Activated T-helper 2 cell treated with anti-CD3 and anti-CD28 coated beads, Interferon-gamma antibody, Interleukin-2, Interleukin-4, amounts not matched to agents 10 μg/mL and 5 μg/mL and 100 μg/mL, durations not matched to agents 14 hours and 24 hours and 36 hours (primary cell): ENCODE measurements at regions of chr11 and their contacts with region 1.

Region 1: DNA sequence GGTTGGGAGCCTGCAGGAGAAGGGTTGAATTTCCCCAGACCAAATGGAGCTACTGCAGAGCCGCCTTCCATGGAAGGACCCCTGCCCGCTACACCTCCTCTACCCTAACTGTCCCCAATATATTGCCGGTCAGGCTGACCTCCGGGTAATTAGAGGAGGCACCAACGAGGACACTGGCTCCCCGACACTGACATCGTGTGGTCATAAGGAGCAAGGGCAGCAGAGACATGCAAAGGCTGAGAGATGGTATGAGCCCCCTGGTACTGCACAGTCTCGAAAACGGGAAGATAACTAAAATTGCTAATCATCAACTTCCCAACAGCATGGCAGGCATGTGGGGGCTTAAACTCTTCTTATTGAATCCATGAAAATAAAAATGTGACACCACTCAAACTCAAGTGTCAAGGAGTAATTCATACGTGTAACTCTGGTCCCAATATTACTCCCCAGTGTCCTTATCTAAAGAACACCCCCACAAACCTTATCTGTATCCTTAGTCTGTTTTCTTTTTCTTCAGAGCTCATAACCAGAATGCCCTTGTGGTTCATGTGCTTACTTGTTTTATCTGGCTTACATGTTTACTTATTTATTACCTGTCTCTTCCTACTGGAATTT is 4.4 kb downstream of the CAVIN3 start:
- DNase-seq: peak; percentile 16
- H3K4me3 Mint-ChIP-seq: no peak overlapping the region
- H3K27ac Mint-ChIP-seq: no peak overlapping the region
- H3K4me1 Mint-ChIP-seq: peaks cover 18% of the 10 kb centered on the region
- H3K27me3 Mint-ChIP-seq: peaks cover 20% of the 10 kb centered on the region

Region 2: DNA sequence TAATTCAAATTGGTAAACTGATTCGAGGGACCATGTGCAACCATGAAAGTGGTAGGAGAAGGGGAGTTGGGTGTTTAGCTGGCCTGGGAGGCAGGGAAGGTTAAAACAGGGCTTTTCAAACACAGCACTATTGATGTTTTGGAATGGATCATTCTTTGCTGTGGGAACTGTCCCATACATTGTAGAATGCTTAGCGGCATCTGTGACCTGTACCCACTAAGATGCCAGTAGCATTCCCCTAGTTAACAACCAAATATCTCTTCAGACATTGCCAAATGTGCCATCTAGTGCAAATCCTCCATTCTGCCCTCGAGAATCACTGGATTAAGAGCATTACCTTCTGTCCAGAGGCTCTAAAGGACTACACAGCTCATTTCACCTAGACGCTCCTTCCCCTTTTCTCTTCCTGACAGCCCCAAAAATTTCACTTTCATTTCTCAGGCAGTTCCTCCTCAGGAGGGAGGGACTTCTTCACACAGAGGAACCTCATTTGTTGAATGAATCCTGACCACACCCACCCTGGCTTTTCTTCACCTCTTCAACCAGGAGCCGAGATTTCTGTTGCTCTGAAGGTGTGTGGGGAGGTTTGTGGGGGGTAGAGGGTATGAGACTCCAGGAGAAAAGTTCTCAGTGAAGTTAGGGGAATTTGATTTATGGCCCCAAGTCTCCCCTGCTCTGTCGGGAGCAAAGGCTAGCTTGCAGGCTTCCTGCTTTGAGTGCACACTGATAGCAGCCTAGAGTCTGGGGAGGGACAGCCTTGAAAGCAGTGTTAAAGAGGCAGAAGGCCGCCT is 691.2 kb before region 1 on chr11 and contains the start of gene TRIM34:
- intact Hi-C with region 1: loop called (anchors 10 kb)
- DNase-seq: peak; percentile 62
- H3K4me3 Mint-ChIP-seq: peak within 1 kb of the TSS; percentile 92
- H3K27ac Mint-ChIP-seq: peak within 1 kb of the TSS; percentile 71
- H3K4me1 Mint-ChIP-seq: peaks cover 42% of the 10 kb centered on the region
- H3K27me3 Mint-ChIP-seq: no peaks in the 10 kb centered on the region
- total RNA-seq, gene TRIM34: 6.7 and 7.8 TPM in 2 replicates

Region 3: DNA sequence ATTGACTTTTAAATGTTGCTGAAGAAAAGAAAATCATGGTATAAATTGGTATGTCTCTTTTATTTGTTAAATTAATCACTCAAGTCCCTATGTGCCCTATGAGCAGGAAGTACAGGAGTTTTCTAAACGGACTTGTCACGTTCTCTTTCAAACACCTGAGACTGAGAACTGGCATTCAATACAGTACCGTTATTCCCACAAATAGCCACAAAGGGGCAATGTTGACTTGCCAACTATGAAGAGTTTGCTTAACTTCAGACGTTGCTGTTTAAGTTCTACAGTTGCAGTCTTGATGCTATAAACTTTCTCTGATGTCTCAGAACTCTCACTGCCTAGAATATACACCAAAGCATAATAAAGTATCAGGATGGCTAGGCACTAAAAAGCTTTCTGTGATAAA is 293.0 kb before region 1 on chr11:
- intact Hi-C with region 1: loop called (anchors 2 kb)
- DNase-seq: no peak
- H3K4me3 Mint-ChIP-seq: no peak overlapping the region
- H3K27ac Mint-ChIP-seq: no peak overlapping the region
- H3K4me1 Mint-ChIP-seq: no peaks in the 10 kb centered on the region
- H3K27me3 Mint-ChIP-seq: peaks cover 30% of the 10 kb centered on the region

Region 4: GRCh38 chr11:6234387-6235107 is 81.4 kb before region 1 on chr11 and contains the start of gene FHIP1B:
- intact Hi-C with region 1: loop called (anchors 1 kb)
- DNase-seq: peak; percentile 100
- H3K4me3 Mint-ChIP-seq: peak within 1 kb of the TSS; percentile 97
- H3K27ac Mint-ChIP-seq: peak within 1 kb of the TSS; percentile 95
- H3K4me1 Mint-ChIP-seq: peaks cover 38% of the 10 kb centered on the region
- H3K27me3 Mint-ChIP-seq: no peaks in the 10 kb centered on the region
- total RNA-seq, gene FHIP1B: 17.6 and 17.9 TPM in 2 replicates

Region 5: DNA sequence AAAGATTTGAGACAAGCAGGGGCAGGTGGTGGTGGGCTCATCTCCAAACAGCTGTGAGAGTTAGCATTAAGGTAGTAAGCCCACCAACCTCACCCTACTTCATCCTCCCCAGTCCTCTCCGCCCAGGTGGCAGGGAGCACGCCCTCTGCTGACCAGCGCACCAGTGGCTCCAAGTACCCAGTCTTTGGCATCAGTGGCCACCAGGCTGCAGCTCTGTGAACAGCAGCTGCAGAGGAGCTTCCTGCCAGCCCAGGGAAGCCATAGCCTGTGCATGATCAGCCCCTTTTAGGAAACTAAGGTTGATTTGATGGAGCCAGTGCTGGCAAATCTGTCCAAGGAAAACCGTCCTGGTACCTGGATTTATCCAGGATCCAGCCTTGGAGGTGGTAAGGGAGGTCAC is 17.3 kb before region 1 on chr11:
- intact Hi-C with region 1: no loop called
- DNase-seq: no peak
- H3K4me3 Mint-ChIP-seq: no peak overlapping the region
- H3K27ac Mint-ChIP-seq: no peak overlapping the region
- H3K4me1 Mint-ChIP-seq: no peaks in the 10 kb centered on the region
- H3K27me3 Mint-ChIP-seq: peaks cover 5% of the 10 kb centered on the region

Region 6: DNA sequence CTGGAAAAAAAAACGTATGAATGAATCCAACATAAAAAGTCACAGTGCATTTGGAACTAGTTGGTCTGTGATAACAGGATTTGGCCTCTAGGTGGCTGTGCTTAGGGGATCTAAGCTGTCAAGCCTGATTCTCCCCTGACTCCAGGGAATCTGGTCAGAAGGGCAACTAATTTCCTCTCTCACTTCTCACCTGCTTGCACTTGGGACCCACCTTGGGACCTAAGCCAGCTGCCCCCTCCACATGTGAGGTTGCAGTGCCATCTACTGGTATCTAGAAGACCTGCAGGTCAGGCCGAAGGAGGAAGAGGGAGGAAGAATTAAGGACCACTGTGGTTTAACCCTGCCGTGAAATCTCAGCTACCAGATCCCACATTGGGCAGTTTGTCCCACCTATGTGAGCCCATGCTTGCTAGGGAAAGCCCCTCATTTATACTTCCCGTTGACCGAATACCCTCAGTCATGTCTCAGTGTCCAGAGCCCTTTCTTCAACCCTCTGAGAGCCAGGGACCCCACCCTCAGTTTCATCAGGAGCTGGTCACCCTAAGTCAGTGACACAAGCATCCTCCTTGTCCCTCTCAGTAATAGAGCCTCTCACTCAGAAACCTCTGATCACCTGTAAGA is 37.6 kb after region 1 on chr11:
- intact Hi-C with region 1: loop called (anchors 1 kb)
- DNase-seq: peak; percentile 44
- H3K4me3 Mint-ChIP-seq: no peak overlapping the region
- H3K27ac Mint-ChIP-seq: peak overlapping the region; percentile 34
- H3K4me1 Mint-ChIP-seq: peaks cover 45% of the 10 kb centered on the region
- H3K27me3 Mint-ChIP-seq: no peaks in the 10 kb centered on the region

Region 7: GRCh38 chr11:6402561-6402981 is 86.7 kb after region 1 on chr11:
- intact Hi-C with region 1: loop called (anchors 5 kb)
- DNase-seq: peak; percentile 78
- H3K4me3 Mint-ChIP-seq: peak overlapping the region; percentile 64
- H3K27ac Mint-ChIP-seq: peak overlapping the region; percentile 93
- H3K4me1 Mint-ChIP-seq: peaks cover 56% of the 10 kb centered on the region
- H3K27me3 Mint-ChIP-seq: no peaks in the 10 kb centered on the region

Region 8: DNA sequence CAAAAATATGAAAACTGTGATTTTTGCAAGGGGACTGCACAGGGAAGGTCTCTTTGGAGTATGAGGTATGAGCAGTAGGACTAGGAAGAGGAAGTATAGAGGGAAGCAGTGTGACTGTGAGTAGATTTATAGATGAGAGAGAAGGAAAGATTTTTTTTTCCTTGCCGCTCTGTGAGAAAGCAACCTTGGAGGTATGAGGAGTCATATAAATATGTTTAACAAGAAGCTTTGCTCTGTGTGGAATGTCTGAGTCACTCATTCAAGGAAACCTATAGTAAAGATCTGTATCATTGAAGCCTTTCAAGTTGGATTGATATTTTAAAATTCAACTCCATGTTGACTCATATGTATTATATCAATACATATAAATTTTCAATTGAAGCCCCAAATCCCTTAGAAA is 207.3 kb after region 1 on chr11:
- intact Hi-C with region 1: loop called (anchors 5 kb)
- DNase-seq: no peak
- H3K4me3 Mint-ChIP-seq: no peak overlapping the region
- H3K27ac Mint-ChIP-seq: peak overlapping the region; percentile 52
- H3K4me1 Mint-ChIP-seq: peaks cover 40% of the 10 kb centered on the region
- H3K27me3 Mint-ChIP-seq: no peaks in the 10 kb centered on the region

Region 9: GRCh38 chr11:6586434-6587359 is 270.8 kb after region 1 on chr11:
- intact Hi-C with region 1: no loop called
- DNase-seq: no peak
- H3K4me3 Mint-ChIP-seq: no peak overlapping the region
- H3K27ac Mint-ChIP-seq: no peak overlapping the region
- H3K4me1 Mint-ChIP-seq: no peaks in the 10 kb centered on the region
- H3K27me3 Mint-ChIP-seq: no peaks in the 10 kb centered on the region